ENCODE measurements at regions of chr15 and their contacts with region 1.

Region 1: GRCh38 chr15:68252925-68253534 is 23.5 kb upstream of the CLN6 start:
- DNase-seq: peak; percentile 26
- ATAC-seq: peak; percentile 79
- H3K4me3 ChIP-seq: no peak overlapping the region
- H3K27ac ChIP-seq: no peak overlapping the region
- H3K4me1 ChIP-seq: no peaks in the 10 kb centered on the region
- H3K27me3 ChIP-seq: no peaks in the 10 kb centered on the region; a peak in 2 of 4 replicates
- CTCF ChIP-seq: peak; percentile 80 to 91 (median 87)
- EP300 ChIP-seq: no peak
- POLR2A ChIP-seq: no peak
- RAD21 ChIP-seq: peak; percentile 93

Region 2: GRCh38 chr15:68235022-68235421 is 18.0 kb before region 1 on chr15:
- CTCF ChIA-PET with region 1: interaction called, 14 read pairs
- POLR2A ChIA-PET with region 1: no interaction called
- RAD21 ChIA-PET with region 1: interaction called, 3 read pairs
- SMC1A ChIA-PET with region 1: interaction called, 7 read pairs
- in situ Hi-C with region 1: no loop called
- intact Hi-C with region 1: no loop called
- DNase-seq: no peak
- ATAC-seq: no peak
- H3K4me3 ChIP-seq: no peak overlapping the region
- H3K27ac ChIP-seq: no peak overlapping the region
- H3K4me1 ChIP-seq: peaks cover 7% of the 10 kb centered on the region
- H3K27me3 ChIP-seq: no peaks in the 10 kb centered on the region
- CTCF ChIP-seq: no peak
- EP300 ChIP-seq: no peak
- POLR2A ChIP-seq: no peak
- RAD21 ChIP-seq: no peak

Region 3: GRCh38 chr15:68298882-68299381 is 45.9 kb after region 1 on chr15:
- CTCF ChIA-PET with region 1: interaction called, 114 read pairs
- POLR2A ChIA-PET with region 1: interaction called, 4 read pairs
- RAD21 ChIA-PET with region 1: interaction called, 7 read pairs
- SMC1A ChIA-PET with region 1: interaction called, 4 read pairs
- in situ Hi-C with region 1: no loop called
- intact Hi-C with region 1: no loop called
- DNase-seq: peak; percentile 77
- ATAC-seq: peak; percentile 96
- H3K4me3 ChIP-seq: peak overlapping the region; percentile 23; the same call in 1 of the 2 replicates
- H3K27ac ChIP-seq: peak overlapping the region; percentile 84
- H3K4me1 ChIP-seq: peaks cover 27% of the 10 kb centered on the region
- H3K27me3 ChIP-seq: no peaks in the 10 kb centered on the region
- CTCF ChIP-seq: no peak
- EP300 ChIP-seq: 0 out of 4 replicates have a peak, but pooled peaks of 1 of the 2 experiments have one; percentile 21
- POLR2A ChIP-seq: no peak; the same call in 1 of the 2 replicates
- RAD21 ChIP-seq: no peak

Region 4: GRCh38 chr15:68316061-68316804 is 63.2 kb after region 1 on chr15:
- CTCF ChIA-PET with region 1: interaction called, 21 read pairs
- POLR2A ChIA-PET with region 1: no interaction called
- RAD21 ChIA-PET with region 1: interaction called, 7 read pairs
- SMC1A ChIA-PET with region 1: interaction called, 4 read pairs
- in situ Hi-C with region 1: no loop called
- intact Hi-C with region 1: no loop called
- DNase-seq: no peak
- ATAC-seq: peak; percentile 35; the same call in 2 of the 3 replicates
- H3K4me3 ChIP-seq: no peak overlapping the region
- H3K27ac ChIP-seq: no peak overlapping the region
- H3K4me1 ChIP-seq: no peaks in the 10 kb centered on the region
- H3K27me3 ChIP-seq: no peaks in the 10 kb centered on the region; a peak in 2 of 4 replicates
- CTCF ChIP-seq: peak; percentile 36 to 52 (median 40); a peak in 5 of 6 replicates
- EP300 ChIP-seq: no peak
- POLR2A ChIP-seq: no peak
- RAD21 ChIP-seq: peak; percentile 23; the same call in 1 of the 2 replicates

Region 5: DNA sequence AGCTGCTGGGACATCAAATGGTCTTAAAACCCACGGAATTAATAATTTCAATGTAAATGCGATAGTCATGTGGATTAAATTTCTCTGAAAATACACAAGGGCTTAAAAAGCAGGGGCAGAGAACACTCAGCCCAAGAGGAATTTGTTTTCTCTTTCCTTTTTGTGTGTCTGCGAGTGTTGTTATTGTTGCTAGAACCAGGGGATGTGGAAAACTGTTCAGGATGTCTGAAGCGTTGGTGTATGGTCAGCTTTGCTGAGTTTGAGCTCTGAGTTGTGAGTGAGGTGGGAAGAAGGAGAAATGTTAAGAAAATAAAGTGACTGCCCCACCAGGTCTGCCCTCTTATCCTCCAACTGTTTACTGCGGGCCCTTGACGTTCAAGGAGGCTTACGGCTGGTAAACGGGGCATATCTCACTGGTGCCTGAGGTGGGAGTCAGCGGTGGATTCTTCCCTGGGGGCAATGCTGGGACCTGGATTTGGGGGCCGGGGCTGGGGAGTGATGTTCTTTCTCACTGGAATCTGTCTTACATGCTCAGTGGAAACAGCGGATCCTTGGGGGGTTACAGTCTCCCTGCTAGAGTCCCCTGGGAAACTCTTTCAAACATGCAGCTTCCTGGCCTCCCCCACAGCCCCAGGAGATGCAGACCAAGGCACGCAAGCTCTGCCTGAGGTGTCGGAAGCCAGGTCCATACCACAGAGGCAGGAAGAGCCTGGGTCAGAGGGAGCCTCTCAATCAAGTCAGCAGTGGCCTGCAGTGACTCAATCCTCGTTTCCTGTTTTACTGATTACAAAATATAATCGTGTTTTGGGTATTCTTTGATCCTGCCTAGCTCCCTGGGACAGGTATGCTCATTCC is 137.1 kb after region 1 on chr15:
- CTCF ChIA-PET with region 1: interaction called, 6 read pairs
- POLR2A ChIA-PET with region 1: no interaction called
- RAD21 ChIA-PET with region 1: no interaction called
- SMC1A ChIA-PET with region 1: no interaction called
- in situ Hi-C with region 1: loop called (anchors 5 kb)
- intact Hi-C with region 1: no loop called
- DNase-seq: peak; percentile 37
- ATAC-seq: peak; percentile 96
- H3K4me3 ChIP-seq: no peak overlapping the region
- H3K27ac ChIP-seq: no peak overlapping the region; the same call in 1 of the 2 replicates
- H3K4me1 ChIP-seq: peaks cover 7% of the 10 kb centered on the region; the same call in 1 of the 2 replicates
- H3K27me3 ChIP-seq: no peaks in the 10 kb centered on the region; a peak in 1 of 4 replicates
- CTCF ChIP-seq: no peak
- EP300 ChIP-seq: no peak
- POLR2A ChIP-seq: no peak
- RAD21 ChIP-seq: no peak

Region 6: DNA sequence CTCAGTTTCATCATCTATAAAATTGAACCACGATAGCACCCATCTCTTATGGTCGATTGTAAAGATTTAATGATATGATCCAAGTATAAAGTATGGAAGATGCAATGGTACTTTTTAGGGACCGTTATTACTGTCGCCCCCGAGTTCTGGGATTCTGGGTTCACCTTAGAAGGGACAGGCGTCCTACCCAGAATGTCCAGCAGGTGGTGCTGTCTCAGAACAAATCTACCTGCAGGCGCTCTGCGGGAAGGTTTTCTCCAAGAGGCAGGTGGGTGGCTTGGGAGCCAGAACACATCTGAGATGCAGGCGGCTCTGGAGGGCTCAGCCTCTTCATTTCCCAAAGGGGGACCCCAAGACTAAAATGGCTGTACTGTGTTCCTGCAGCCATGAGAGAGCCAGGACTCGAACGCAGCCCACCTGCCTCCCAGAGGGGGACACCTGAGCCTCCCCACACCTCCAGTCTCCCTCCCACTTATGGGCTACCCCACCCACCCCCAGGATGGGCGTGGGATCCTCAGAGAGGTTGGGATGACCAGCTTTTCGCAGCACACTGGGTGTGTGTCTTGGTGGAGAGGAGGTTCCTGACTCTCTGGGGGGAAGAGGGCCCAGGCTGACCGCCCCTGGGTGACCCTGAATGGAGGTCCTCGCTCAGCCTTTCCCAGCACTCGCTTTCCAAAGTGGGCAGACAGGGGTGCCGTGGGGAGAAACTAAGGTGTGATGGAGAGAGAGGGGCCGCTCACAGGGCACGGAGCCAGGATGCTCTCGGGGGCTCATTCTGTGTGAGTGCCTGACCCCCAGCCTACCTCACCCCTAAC is 297.7 kb after region 1 on chr15:
- CTCF ChIA-PET with region 1: interaction called, 10 read pairs
- POLR2A ChIA-PET with region 1: no interaction called
- RAD21 ChIA-PET with region 1: no interaction called
- SMC1A ChIA-PET with region 1: interaction called, 6 read pairs
- in situ Hi-C with region 1: no loop called
- intact Hi-C with region 1: no loop called
- DNase-seq: no peak
- ATAC-seq: peak; percentile 59
- H3K4me3 ChIP-seq: no peak overlapping the region
- H3K27ac ChIP-seq: no peak overlapping the region
- H3K4me1 ChIP-seq: no peaks in the 10 kb centered on the region
- H3K27me3 ChIP-seq: no peaks in the 10 kb centered on the region
- CTCF ChIP-seq: peak; percentile 83 to 88 (median 88)
- EP300 ChIP-seq: no peak
- POLR2A ChIP-seq: no peak
- RAD21 ChIP-seq: peak; percentile 68